Right ventricle myocardium superior (tissue), 1 donor: ENCODE measurements at regions of chr5 and their contacts with region 1.

Region 1: GRCh38 chr5:115377468-115378217 is 81.2 kb upstream of the CCDC112 start:
- DNase-seq: no peak
- ATAC-seq: peak; percentile 74

Region 2: GRCh38 chr5:115455301-115455707 is 77.7 kb after region 1 on chr5:
- intact Hi-C with region 1: loop called (anchors 5 kb)
- DNase-seq: no peak
- ATAC-seq: peak; percentile 34

Region 3: GRCh38 chr5:115522832-115523403 is 145.3 kb after region 1 on chr5:
- intact Hi-C with region 1: no loop called
- DNase-seq: no peak
- ATAC-seq: no peak

Region 4: GRCh38 chr5:115544436-115545350 is 167.1 kb after region 1 on chr5 and contains the start of gene FEM1C:
- intact Hi-C with region 1: loop called (anchors 10 kb)
- DNase-seq: peak; percentile 98
- ATAC-seq: peak; percentile 98
- total RNA-seq, gene FEM1C: 46.8 TPM

Region 5: DNA sequence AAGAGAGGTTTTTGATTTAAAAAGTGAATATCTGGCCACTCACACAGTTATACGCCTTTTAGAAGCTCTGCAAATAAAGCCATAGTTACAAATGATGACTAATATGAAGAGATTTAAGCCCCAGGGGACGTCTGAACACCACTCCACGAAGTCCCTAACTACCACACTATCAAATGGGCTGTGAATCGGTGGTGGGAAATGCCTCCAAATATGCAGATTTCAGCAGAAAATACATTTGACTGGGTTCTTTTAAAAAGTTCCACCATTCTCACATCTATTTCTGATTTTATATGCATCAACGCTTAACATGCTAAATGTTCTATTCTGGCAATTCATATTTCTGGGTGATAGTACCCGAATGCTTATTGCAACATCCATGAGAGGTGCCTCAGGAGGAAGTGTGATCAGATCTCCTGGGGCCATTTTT is 202.1 kb after region 1 on chr5:
- intact Hi-C with region 1: loop called (anchors 5 kb)
- DNase-seq: no peak
- ATAC-seq: no peak